ENCODE measurements at regions of chr16 and their contacts with region 1.

Region 1: GRCh38 chr16:86865524-86866301 is 287.4 kb downstream of the FOXL1 start:
- DNase-seq: peak; percentile 91
- ATAC-seq: peak; percentile 97

Region 2: GRCh38 chr16:86783636-86784626 is 81.8 kb before region 1 on chr16:
- intact Hi-C with region 1: no loop called
- DNase-seq: no peak
- ATAC-seq: no peak

Region 3: GRCh38 chr16:86809458-86809981 is 56.2 kb before region 1 on chr16:
- intact Hi-C with region 1: no loop called
- DNase-seq: no peak
- ATAC-seq: no peak

Region 4: GRCh38 chr16:86823895-86824671 is 41.6 kb before region 1 on chr16:
- intact Hi-C with region 1: no loop called
- DNase-seq: no peak
- ATAC-seq: no peak

Region 5: DNA sequence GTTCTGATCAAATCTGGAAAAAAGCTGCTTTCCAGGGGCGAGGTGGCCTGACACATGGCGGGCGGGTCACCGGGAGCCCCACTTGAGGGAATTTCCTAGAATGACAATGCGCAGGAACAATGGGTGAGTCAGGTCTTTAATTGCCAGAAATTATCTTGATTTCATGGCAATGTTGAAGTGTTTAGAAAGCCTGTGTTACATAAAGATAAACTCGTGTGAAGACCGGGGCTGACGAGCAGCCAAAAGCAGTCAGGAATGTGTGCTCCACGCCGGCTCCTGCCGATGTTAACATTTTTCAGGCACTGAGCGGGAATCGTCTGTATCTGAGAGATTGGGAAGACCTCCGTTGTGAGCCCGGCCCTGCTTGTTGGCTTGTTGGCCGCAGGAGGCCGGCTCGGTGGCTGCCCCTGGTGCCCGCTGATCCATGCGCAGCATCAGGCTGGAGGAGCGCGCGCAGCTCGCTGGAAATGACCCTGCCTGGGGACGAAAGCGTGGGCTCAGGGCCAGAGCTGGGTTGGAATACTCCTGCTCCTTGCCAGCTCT is 65.8 kb after region 1 on chr16:
- intact Hi-C with region 1: loop called (anchors 5 kb)
- DNase-seq: peak; percentile 78
- ATAC-seq: peak; percentile 81

Region 6: DNA sequence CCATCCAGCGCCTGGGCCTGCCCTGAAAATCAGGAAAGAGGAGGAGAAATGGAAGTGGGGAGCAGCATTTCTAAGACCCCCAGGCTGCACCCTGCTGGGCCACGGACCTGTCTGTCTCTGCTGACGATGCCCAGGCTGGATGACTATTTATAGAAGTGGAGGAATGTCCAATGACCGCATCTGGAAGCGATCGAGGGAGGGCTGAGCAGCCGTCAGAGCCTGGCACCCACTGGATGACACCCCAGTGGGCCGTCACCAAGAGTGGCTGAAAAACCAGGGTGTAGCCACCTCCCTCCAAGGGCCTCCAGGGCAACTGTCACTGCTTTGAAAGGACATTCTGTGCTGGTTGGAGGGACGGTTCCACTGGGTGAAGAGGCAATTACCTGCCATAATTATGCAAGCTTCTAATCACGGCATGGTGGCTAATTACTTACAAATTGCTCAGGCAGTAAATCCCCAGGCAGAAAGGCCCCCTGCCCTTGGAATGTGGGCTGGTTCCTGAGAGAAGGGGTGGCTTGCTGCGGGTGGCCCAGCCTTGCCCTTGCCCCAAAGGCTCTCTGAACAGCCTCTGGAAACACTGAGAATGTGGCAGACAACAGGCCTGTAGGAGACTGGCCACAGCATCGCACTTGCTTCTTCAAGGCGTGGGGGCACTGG is 119.4 kb after region 1 on chr16:
- intact Hi-C with region 1: loop called (anchors 2 kb)
- DNase-seq: peak; percentile 73
- ATAC-seq: peak; percentile 85

Region 7: DNA sequence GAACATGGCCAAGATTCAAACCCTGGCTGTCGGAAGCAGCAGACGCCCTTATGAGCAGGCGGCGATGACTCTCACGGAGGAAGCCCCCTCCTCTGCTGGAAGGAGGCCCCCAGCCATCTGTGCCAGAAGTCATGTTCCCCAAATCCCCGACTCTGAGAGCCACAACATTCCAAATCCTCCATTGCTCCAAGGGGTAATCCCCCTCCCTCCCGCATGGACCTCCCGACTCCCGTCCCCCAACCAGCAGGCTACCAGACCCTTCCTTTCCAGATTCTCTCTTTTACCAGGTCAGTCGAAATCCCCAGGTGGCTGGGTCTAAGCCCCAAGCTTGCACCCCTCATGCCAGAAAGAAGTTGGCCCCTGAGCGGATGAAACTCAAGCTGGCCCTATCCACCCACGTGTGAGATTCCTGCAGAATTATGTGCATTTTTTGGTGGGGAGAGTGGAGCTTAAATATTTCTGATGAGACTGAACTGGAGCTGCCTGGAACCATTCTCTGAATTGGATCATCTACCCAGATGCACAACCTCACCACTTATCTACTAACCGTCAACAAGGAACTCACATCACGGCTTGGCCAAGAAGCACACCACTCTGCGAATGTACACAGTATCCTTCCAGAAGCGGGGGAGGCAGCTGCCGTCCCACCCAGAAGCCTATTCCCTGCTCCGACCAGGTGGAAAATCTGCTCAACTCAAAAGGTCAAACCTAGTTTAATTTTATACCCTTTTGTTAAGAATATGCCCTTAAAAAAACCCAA is 168.0 kb after region 1 on chr16:
- intact Hi-C with region 1: loop called (anchors 1 kb)
- DNase-seq: peak; percentile 65
- ATAC-seq: peak; percentile 87

Region 8: DNA sequence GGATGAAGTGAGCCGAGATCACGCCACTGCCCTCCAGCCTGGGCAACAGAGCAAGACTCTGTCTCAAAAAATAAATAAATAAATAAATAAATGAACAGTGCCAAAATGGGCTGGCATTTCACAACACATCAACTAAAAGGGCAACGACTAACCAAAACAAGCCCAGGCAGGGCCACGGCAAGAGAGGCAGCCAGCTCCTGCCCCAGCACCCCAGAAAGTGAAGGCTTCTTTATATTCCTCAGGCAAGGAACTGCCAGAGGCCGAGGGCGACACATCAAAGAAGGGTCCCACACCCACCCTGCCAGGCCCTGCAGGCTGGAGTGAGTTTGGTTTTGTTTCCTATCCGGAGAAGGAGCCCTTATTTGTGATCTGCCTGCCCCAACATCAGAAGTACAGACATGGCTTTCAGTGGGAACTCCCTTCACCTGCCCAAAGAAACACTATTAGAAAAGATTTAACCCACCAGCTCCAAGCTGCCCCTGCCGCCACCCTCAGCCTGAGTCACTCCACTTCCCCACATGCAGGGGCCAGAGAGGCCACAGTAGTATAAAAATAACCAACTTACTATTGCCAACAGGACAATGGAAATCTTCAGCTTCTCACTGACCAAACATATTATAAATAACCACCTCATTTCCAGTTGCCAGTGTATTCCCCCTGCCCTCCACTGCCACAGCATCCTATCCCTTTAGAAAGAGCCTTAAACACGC is 509.9 kb after region 1 on chr16:
- intact Hi-C with region 1: no loop called
- DNase-seq: no peak
- ATAC-seq: peak; percentile 63

Measured in Right ventricle myocardium inferior (tissue), 1 donor.